ENCODE measurements at regions of chr2 and their contacts with region 1.

Region 1: GRCh38 chr2:39379643-39380524 is 57.2 kb downstream of the MAP4K3 start:
- DNase-seq: peak; percentile 59
- ATAC-seq: peak; percentile 77
- H3K4me3 ChIP-seq: no peak overlapping the region
- H3K27ac ChIP-seq: peak overlapping the region; percentile 36
- H3K4me1 ChIP-seq: peaks cover 47% of the 10 kb centered on the region
- H3K27me3 ChIP-seq: no peaks in the 10 kb centered on the region
- CTCF ChIP-seq: peak; percentile 80
- EP300 ChIP-seq: no peak
- POLR2A ChIP-seq: no peak
- RAD21 ChIP-seq: peak; percentile 73

Region 2: GRCh38 chr2:39124000-39124745 is 255.7 kb before region 1 on chr2:
- CTCF ChIA-PET with region 1: no interaction called
- POLR2A ChIA-PET with region 1: no interaction called
- in situ Hi-C with region 1: no loop called
- intact Hi-C with region 1: no loop called
- DNase-seq: peak; percentile 97
- ATAC-seq: peak; percentile 79
- H3K4me3 ChIP-seq: peak overlapping the region; percentile 81 to 82 (median 81)
- H3K27ac ChIP-seq: peak overlapping the region; percentile 93
- H3K4me1 ChIP-seq: peaks cover 47% of the 10 kb centered on the region
- H3K27me3 ChIP-seq: no peaks in the 10 kb centered on the region; a peak in 1 of 5 replicates
- CTCF ChIP-seq: peak; percentile 93
- EP300 ChIP-seq: peak; percentile 43 to 78; a peak in 2 of 4 replicates
- POLR2A ChIP-seq: peak; percentile 85 to 90
- RAD21 ChIP-seq: peak; percentile 72

Region 3: DNA sequence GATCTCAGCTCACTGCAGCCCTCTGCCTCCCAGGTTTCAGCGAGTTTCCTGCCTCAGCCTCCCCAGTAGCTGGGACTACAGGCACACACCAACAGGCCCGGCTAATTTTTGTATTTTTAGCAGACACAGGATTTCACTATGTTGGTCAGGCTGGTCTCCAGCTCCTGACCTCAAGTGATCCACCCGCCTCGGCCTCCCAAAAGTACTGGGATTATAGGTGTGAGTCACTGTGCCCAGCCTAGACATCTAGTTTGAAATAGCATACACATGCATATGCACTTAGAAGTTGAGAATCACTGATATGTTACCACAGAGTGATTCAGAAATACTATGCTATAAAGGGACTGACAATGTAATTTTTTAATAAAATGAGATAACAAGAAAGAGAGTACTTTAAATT is 66.3 kb before region 1 on chr2:
- CTCF ChIA-PET with region 1: no interaction called
- POLR2A ChIA-PET with region 1: no interaction called
- in situ Hi-C with region 1: no loop called
- intact Hi-C with region 1: no loop called
- DNase-seq: no peak
- ATAC-seq: no peak; the same call in 2 of the 3 replicates
- H3K4me3 ChIP-seq: no peak overlapping the region
- H3K27ac ChIP-seq: no peak overlapping the region
- H3K4me1 ChIP-seq: no peaks in the 10 kb centered on the region
- H3K27me3 ChIP-seq: no peaks in the 10 kb centered on the region
- CTCF ChIP-seq: no peak
- EP300 ChIP-seq: no peak
- POLR2A ChIP-seq: no peak
- RAD21 ChIP-seq: no peak

Region 4: GRCh38 chr2:39436592-39437510 is 57.0 kb after region 1 on chr2 and contains the start of gene MAP4K3:
- CTCF ChIA-PET with region 1: no interaction called
- POLR2A ChIA-PET with region 1: interaction called, 3 read pairs
- in situ Hi-C with region 1: no loop called
- intact Hi-C with region 1: loop called (anchors 1 kb)
- DNase-seq: peak; percentile 96
- ATAC-seq: peak; percentile 85
- H3K4me3 ChIP-seq: peak within 1 kb of the TSS; percentile 92 to 95 (median 93)
- H3K27ac ChIP-seq: peak within 1 kb of the TSS; percentile 94
- H3K4me1 ChIP-seq: peaks cover 62% of the 10 kb centered on the region
- H3K27me3 ChIP-seq: no peaks in the 10 kb centered on the region; a peak in 1 of 5 replicates
- CTCF ChIP-seq: peak; percentile 32
- EP300 ChIP-seq: peak in 1 of 2 experiments; percentile 42; a peak in 1 of 4 replicates
- POLR2A ChIP-seq: peak; percentile 64 to 81
- RAD21 ChIP-seq: peak; percentile 63
- total RNA-seq, gene MAP4K3: 45.9 and 49.6 TPM in 2 replicates

Region 5: GRCh38 chr2:39550701-39551285 is 170.9 kb after region 1 on chr2:
- CTCF ChIA-PET with region 1: no interaction called
- POLR2A ChIA-PET with region 1: no interaction called
- in situ Hi-C with region 1: no loop called
- intact Hi-C with region 1: loop called (anchors 2 kb)
- DNase-seq: peak; percentile 99
- ATAC-seq: peak; percentile 98
- H3K4me3 ChIP-seq: no peak overlapping the region
- H3K27ac ChIP-seq: peak overlapping the region; percentile 72
- H3K4me1 ChIP-seq: peaks cover 69% of the 10 kb centered on the region
- H3K27me3 ChIP-seq: no peaks in the 10 kb centered on the region
- CTCF ChIP-seq: peak; percentile 43
- EP300 ChIP-seq: peak; percentile 65 to 100; a peak in 3 of 4 replicates
- POLR2A ChIP-seq: 0 out of 4 replicates have a peak, but pooled peaks of 1 of the 2 experiments have one; percentile 20
- RAD21 ChIP-seq: 0 out of 2 replicates have a peak, but pooled peaks have one; percentile 14

Region 6: GRCh38 chr2:39728941-39729351 is 349.1 kb after region 1 on chr2:
- CTCF ChIA-PET with region 1: interaction called, 15 read pairs
- POLR2A ChIA-PET with region 1: interaction called, 4 read pairs
- in situ Hi-C with region 1: loop called (anchors 5 kb)
- intact Hi-C with region 1: loop called (anchors 1 kb)
- DNase-seq: peak; percentile 58
- ATAC-seq: peak; percentile 80
- H3K4me3 ChIP-seq: no peak overlapping the region
- H3K27ac ChIP-seq: no peak overlapping the region
- H3K4me1 ChIP-seq: peaks cover 27% of the 10 kb centered on the region; the same call in 1 of the 2 replicates
- H3K27me3 ChIP-seq: peaks cover 0 to 11% of the 10 kb centered on the region in 2 experiments; a peak in 3 of 5 replicates
- CTCF ChIP-seq: peak; percentile 72
- EP300 ChIP-seq: no peak
- POLR2A ChIP-seq: no peak
- RAD21 ChIP-seq: peak; percentile 67